ENCODE measurements at regions of chr1 and their contacts with region 1.

Region 1: GRCh38 chr1:161045750-161046571 is at the start of gene USF1:
- DNase-seq: peak; percentile 89
- CTCF ChIP-seq: no peak

Region 2: DNA sequence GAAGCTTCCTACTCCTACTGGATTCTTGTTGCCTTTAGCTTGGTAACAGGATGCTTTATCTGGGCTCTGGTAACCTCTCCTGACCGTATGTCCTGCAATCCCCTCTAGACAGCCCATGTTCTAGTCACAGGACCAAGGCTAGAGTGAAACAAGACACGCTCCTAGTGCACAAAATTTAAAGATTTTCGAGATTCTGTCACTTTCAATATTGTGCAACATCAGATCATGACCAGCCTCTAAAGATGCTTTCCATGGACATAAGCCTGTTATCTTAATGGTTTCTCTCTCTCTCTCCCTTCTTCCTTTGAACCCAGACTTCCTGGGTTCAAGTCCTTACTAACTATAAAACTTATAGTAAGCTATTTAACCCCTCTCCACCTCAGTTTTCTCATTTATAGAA is 251.6 kb before region 1 on chr1:
- CTCF ChIA-PET with region 1: no interaction called
- POLR2A ChIA-PET with region 1: no interaction called
- DNase-seq: no peak
- CTCF ChIP-seq: no peak

Region 3: GRCh38 chr1:160837558-160838205 is 208.3 kb before region 1 on chr1:
- CTCF ChIA-PET with region 1: no interaction called
- POLR2A ChIA-PET with region 1: no interaction called
- DNase-seq: peak; percentile 73
- CTCF ChIP-seq: peak; percentile 41

Region 4: GRCh38 chr1:161059293-161059692 is 13.3 kb after region 1 on chr1:
- CTCF ChIA-PET with region 1: interaction called, 21 read pairs
- POLR2A ChIA-PET with region 1: interaction called, 3 read pairs
- DNase-seq: no peak
- CTCF ChIP-seq: no peak

Measured in GM10248 (cell line).